ENCODE measurements at regions of chr4 and their contacts with region 1.

Region 1: GRCh38 chr4:139229534-139230039 is 50.4 kb downstream of the MGARP start:
- DNase-seq: peak; percentile 27 to 61 (median 34)
- ATAC-seq: peak; percentile 81
- H3K4me3 ChIP-seq: no peak overlapping the region
- H3K27ac ChIP-seq: no peak overlapping the region
- H3K4me1 ChIP-seq: peaks cover 0 to 2% of the 10 kb centered on the region in 2 experiments; a peak in 1 of 5 replicates
- H3K27me3 ChIP-seq: no peaks in the 10 kb centered on the region
- CTCF ChIP-seq: peak; percentile 53 to 79 (median 53); a peak in 4 of 6 replicates
- EP300 ChIP-seq: no peak
- POLR2A ChIP-seq: no peak
- RAD21 ChIP-seq: peak; percentile 59 to 77

Region 2: GRCh38 chr4:139099366-139099982 is 130.1 kb before region 1 on chr4:
- CTCF ChIA-PET with region 1: interaction called, 5 read pairs
- POLR2A ChIA-PET with region 1: no interaction called
- in situ Hi-C with region 1: no loop called
- intact Hi-C with region 1: loop called (anchors 1 kb)
- DNase-seq: peak; percentile 70 to 90 (median 71)
- ATAC-seq: peak; percentile 95
- H3K4me3 ChIP-seq: no peak overlapping the region
- H3K27ac ChIP-seq: no peak overlapping the region
- H3K4me1 ChIP-seq: no peaks in the 10 kb centered on the region; a peak in 1 of 5 replicates
- H3K27me3 ChIP-seq: no peaks in the 10 kb centered on the region
- CTCF ChIP-seq: peak; percentile 81 to 92 (median 84)
- EP300 ChIP-seq: no peak
- POLR2A ChIP-seq: no peak
- RAD21 ChIP-seq: peak; percentile 82 to 91

Region 3: DNA sequence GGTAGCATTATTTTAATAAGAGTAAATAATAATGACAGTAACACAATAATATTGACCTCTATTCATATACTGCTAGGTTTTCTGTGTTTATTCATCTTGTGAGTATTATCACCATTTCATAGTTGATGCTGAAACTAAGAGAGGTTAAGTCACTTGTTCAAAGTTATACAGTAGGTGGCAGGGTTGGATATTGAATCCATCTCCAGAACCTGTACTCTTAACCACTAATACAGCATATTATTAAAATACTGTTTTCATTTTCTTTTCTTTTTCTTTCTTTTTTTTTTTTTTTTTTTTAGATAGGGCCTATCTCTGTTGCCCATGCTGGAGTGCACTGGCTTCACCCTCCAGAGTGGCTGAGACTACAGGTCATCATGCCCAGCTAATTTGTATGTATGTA is 45.5 kb before region 1 on chr4:
- CTCF ChIA-PET with region 1: interaction called, 7 read pairs
- POLR2A ChIA-PET with region 1: interaction called, 4 read pairs
- in situ Hi-C with region 1: no loop called
- intact Hi-C with region 1: loop called (anchors 1 kb)
- DNase-seq: no peak
- ATAC-seq: peak; percentile 46
- H3K4me3 ChIP-seq: no peak overlapping the region
- H3K27ac ChIP-seq: no peak overlapping the region
- H3K4me1 ChIP-seq: peaks cover 5 to 14% of the 10 kb centered on the region in 2 experiments; a peak in 3 of 5 replicates
- H3K27me3 ChIP-seq: no peaks in the 10 kb centered on the region
- CTCF ChIP-seq: peak in 2 of 3 experiments; percentile 36 to 66; a peak in 3 of 6 replicates
- EP300 ChIP-seq: no peak
- POLR2A ChIP-seq: no peak
- RAD21 ChIP-seq: peak; percentile 59 to 78

Region 4: DNA sequence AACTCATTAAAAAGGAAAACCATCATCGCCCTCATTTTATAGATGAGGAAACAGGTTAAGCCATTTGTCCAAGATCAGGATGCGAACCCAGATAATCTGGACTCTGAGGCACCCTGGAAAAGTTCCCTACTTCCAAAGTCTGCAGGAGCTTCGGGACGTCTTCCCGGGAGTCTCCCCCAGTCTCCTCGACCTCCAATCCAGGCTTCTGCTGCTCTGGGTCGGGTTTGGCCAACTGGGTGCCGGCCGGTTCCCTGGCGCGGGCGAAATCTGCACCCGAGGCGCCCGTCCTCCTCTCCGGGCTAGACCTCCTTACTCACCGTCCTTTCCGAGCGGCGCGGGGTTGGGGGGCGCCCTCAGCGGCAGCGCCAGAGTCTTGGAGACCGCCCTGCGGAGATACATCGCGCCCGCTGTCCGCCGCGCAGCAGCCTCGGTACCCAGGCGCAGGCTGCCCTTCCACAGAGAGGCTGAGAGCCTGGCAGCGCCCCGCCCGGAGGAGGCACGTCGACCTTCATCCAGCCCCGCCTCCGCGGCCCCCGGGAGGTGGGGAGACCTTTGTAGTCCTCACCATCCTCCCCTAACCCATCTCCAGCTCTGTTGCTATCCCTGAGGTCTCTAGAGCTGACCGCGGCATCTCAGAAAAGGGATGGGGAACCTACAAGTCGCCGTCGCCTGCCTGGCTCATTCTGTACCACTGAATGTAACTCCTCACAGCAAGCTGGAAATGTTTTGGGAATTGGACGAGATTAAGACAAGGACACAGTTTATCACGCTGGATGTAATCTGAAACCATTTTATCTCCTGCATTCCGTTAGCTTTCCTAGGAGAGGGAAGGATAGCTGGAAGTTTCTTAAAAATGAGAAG is 50.4 kb after region 1 on chr4 and contains the start of gene MGARP:
- CTCF ChIA-PET with region 1: no interaction called
- POLR2A ChIA-PET with region 1: no interaction called
- in situ Hi-C with region 1: no loop called
- intact Hi-C with region 1: loop called (anchors 1 kb)
- DNase-seq: no peak
- ATAC-seq: no peak
- H3K4me3 ChIP-seq: no peak within 1 kb of the TSS
- H3K27ac ChIP-seq: no peak within 1 kb of the TSS
- H3K4me1 ChIP-seq: no peaks in the 10 kb centered on the region; a peak in 1 of 5 replicates
- H3K27me3 ChIP-seq: no peaks in the 10 kb centered on the region
- CTCF ChIP-seq: no peak
- EP300 ChIP-seq: no peak
- POLR2A ChIP-seq: no peak
- RAD21 ChIP-seq: no peak
- polyA plus RNA-seq, gene MGARP: 0.23 to 0.45 TPM

Region 5: DNA sequence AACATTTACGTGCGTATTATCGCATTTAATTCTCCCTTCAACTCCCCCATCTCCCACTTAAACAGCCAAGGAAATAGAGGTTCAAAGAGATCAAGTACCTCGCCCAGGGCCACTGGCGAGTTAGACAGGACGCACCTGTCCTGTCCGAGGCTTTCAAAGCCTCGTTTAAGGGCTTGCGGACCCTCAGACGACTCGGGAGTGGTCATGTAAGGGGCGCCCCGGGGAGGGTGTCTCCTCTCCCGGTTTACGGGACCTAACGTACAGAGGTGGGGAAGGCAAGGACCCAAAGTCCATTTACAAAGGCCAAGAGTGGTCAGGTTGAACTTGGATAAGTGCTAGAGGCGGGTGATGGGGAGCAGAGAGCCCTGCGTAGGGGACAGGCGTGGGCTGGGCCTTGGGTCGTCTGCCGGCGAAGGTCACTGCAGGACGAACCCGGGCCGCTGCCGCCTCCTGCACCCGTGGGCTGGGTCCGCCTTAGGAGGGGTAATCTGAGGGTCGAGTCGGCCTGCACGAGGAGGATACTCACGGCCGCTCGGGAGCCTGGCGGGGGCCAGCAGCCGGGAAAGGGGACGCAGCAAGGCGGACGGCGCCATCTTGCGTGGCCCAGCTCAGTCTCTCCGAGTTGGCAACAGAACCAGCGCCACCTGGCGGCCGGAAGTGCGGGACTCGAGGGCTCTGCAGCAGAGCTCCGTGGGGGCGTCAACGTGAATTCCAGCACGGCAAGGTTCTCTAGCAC is 65.8 kb after region 1 on chr4:
- CTCF ChIA-PET with region 1: interaction called, 10 read pairs
- POLR2A ChIA-PET with region 1: interaction called, 3 read pairs
- in situ Hi-C with region 1: no loop called
- intact Hi-C with region 1: loop called (anchors 1 kb)
- DNase-seq: peak; percentile 81 to 98 (median 86)
- ATAC-seq: peak; percentile 89
- H3K4me3 ChIP-seq: peak overlapping the region; percentile 82
- H3K27ac ChIP-seq: peak overlapping the region; percentile 90
- H3K4me1 ChIP-seq: peaks cover 7 to 12% of the 10 kb centered on the region in 2 experiments; a peak in 4 of 5 replicates
- H3K27me3 ChIP-seq: no peaks in the 10 kb centered on the region
- CTCF ChIP-seq: peak; percentile 96 to 99 (median 99)
- EP300 ChIP-seq: peak; percentile 51; the same call in 1 of the 2 replicates
- POLR2A ChIP-seq: peak; percentile 93
- RAD21 ChIP-seq: peak; percentile 77 to 84

Region 6: DNA sequence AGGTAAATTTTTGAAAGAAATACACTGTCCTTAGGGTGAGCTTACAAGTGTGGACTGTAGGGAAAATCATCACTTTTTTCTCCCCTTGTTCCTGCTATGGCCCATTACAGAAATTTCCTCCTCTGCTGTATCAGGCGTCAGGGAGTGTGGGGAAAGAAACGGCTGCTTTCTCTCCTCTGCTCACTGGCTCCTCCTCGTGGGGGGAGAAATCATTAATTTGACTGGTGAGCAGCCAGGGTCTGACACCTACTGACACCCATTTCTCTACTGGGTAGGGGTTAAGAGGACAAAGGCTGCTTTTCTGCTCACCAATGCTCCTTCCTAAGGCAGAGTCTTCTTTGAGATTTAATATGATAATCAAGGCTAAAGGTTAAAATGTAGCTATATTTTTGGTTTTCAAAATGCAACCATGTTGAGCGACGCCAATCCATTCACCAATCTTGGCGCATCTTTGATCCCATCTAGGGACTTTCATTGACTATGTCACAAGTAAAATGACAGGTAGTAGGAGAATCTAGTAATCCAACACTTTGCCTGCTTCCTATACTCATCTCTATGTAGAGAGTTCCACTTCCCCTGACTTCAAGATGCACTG is 301.3 kb after region 1 on chr4:
- CTCF ChIA-PET with region 1: interaction called, 4 read pairs
- POLR2A ChIA-PET with region 1: no interaction called
- in situ Hi-C with region 1: no loop called
- intact Hi-C with region 1: loop called (anchors 10 kb)
- DNase-seq: peak; percentile 61 to 75 (median 68)
- ATAC-seq: peak; percentile 95
- H3K4me3 ChIP-seq: no peak overlapping the region
- H3K27ac ChIP-seq: no peak overlapping the region
- H3K4me1 ChIP-seq: no peaks in the 10 kb centered on the region
- H3K27me3 ChIP-seq: peaks cover 2 to 9% of the 10 kb centered on the region in 2 experiments; a peak in 2 of 5 replicates
- CTCF ChIP-seq: peak; percentile 81 to 92 (median 81)
- EP300 ChIP-seq: no peak
- POLR2A ChIP-seq: no peak
- RAD21 ChIP-seq: peak; percentile 59 to 69